CD4-positive, alpha-beta T cell (primary cell): ENCODE measurements at regions of chr3 and their contacts with region 1.

Region 1: GRCh38 chr3:126083913-126084767 is at the start of gene SLC41A3:
- DNase-seq: peak; percentile 65 to 88 (median 82)
- ATAC-seq: peak; percentile 86
- H3K4me3 ChIP-seq: peak within 1 kb of the TSS; percentile 70
- H3K4me3 Mint-ChIP-seq: peak within 1 kb of the TSS; percentile 93
- H3K27ac ChIP-seq: peak within 1 kb of the TSS; percentile 33 to 72
- H3K27ac Mint-ChIP-seq: peak within 1 kb of the TSS; percentile 85
- H3K4me1 ChIP-seq: peaks cover 28% of the 10 kb centered on the region
- H3K4me1 Mint-ChIP-seq: peaks cover 30% of the 10 kb centered on the region
- H3K27me3 ChIP-seq: no peaks in the 10 kb centered on the region
- H3K27me3 Mint-ChIP-seq: no peaks in the 10 kb centered on the region
- CTCF ChIP-seq: peak; percentile 82
- total RNA-seq, gene SLC41A3: 26.5 to 29.1 TPM

Region 2: DNA sequence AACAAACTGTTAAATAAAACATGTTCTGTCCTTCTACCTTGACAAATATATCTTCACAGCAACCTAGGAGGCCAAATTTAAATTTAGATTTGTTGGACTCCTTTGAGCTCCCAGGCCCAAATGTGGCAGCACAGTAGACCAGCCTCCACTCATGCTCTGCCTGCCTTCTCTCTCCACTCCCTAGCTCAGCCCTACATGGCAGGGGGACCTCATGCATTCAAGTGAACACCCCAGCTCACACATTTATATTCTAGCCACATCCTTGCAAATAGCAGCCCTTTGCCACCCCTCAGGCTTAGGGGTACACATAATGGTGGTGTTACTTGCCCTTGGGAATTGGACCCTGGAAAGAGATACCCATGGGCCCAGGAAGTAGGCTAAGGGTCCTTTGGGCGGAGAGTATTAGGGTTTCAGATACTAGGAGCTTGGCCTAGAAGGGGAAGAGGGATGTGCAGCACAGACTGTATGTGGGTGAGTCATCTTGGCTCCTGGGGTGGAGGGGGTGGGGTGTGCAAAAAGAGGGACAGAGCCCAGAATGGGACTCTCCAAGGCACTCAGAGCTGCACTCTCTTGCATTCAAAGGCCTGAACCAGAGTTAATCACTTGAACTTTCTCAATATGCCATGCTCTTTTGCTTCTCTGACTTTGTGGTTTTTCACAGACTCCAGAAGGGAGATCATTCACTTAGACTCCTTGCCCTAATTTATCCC is 1823.8 kb before region 1 on chr3:
- CTCF ChIA-PET with region 1: no interaction called
- POLR2A ChIA-PET with region 1: no interaction called
- intact Hi-C with region 1: no loop called
- DNase-seq: no peak
- ATAC-seq: no peak
- H3K4me3 ChIP-seq: no peak overlapping the region
- H3K4me3 Mint-ChIP-seq: no peak overlapping the region
- H3K27ac ChIP-seq: no peak overlapping the region
- H3K27ac Mint-ChIP-seq: no peak overlapping the region
- H3K4me1 ChIP-seq: no peaks in the 10 kb centered on the region
- H3K4me1 Mint-ChIP-seq: no peaks in the 10 kb centered on the region
- H3K27me3 ChIP-seq: no peaks in the 10 kb centered on the region
- H3K27me3 Mint-ChIP-seq: no peaks in the 10 kb centered on the region
- CTCF ChIP-seq: no peak

Region 3: GRCh38 chr3:125150525-125151441 is 933.4 kb before region 1 on chr3:
- CTCF ChIA-PET with region 1: no interaction called
- POLR2A ChIA-PET with region 1: no interaction called
- intact Hi-C with region 1: no loop called
- DNase-seq: peak in 12 of 14 experiments; percentile 20 to 73 (median 38)
- ATAC-seq: peak; percentile 81
- H3K4me3 ChIP-seq: no peak overlapping the region
- H3K4me3 Mint-ChIP-seq: no peak overlapping the region
- H3K27ac ChIP-seq: no peak overlapping the region
- H3K27ac Mint-ChIP-seq: no peak overlapping the region
- H3K4me1 ChIP-seq: peaks cover 27% of the 10 kb centered on the region
- H3K4me1 Mint-ChIP-seq: peaks cover 8% of the 10 kb centered on the region
- H3K27me3 ChIP-seq: no peaks in the 10 kb centered on the region
- H3K27me3 Mint-ChIP-seq: no peaks in the 10 kb centered on the region
- CTCF ChIP-seq: peak; percentile 47

Region 4: GRCh38 chr3:125594581-125595011 is 489.5 kb before region 1 on chr3:
- CTCF ChIA-PET with region 1: no interaction called
- POLR2A ChIA-PET with region 1: interaction called, 3 read pairs
- intact Hi-C with region 1: loop called in 1 of 2 experiments (anchors 5 kb)
- DNase-seq: no peak
- ATAC-seq: no peak
- H3K4me3 ChIP-seq: peak overlapping the region; percentile 92
- H3K4me3 Mint-ChIP-seq: peak overlapping the region; percentile 97
- H3K27ac ChIP-seq: peak overlapping the region; percentile 70 to 80
- H3K27ac Mint-ChIP-seq: peak overlapping the region; percentile 84
- H3K4me1 ChIP-seq: peaks cover 45% of the 10 kb centered on the region
- H3K4me1 Mint-ChIP-seq: peaks cover 46% of the 10 kb centered on the region
- H3K27me3 ChIP-seq: no peaks in the 10 kb centered on the region
- H3K27me3 Mint-ChIP-seq: no peaks in the 10 kb centered on the region
- CTCF ChIP-seq: no peak

Region 5: GRCh38 chr3:125990253-125990970 is 93.7 kb before region 1 on chr3:
- CTCF ChIA-PET with region 1: interaction called, 3 read pairs
- POLR2A ChIA-PET with region 1: interaction called, 23 read pairs
- intact Hi-C with region 1: loop called (anchors 1 to 5 kb)
- DNase-seq: peak; percentile 48 to 85 (median 62)
- ATAC-seq: peak; percentile 88
- H3K4me3 ChIP-seq: peak overlapping the region; percentile 91
- H3K4me3 Mint-ChIP-seq: peak overlapping the region; percentile 98
- H3K27ac ChIP-seq: peak overlapping the region; percentile 73 to 87
- H3K27ac Mint-ChIP-seq: peak overlapping the region; percentile 99
- H3K4me1 ChIP-seq: peaks cover 8% of the 10 kb centered on the region
- H3K4me1 Mint-ChIP-seq: peaks cover 53% of the 10 kb centered on the region
- H3K27me3 ChIP-seq: no peaks in the 10 kb centered on the region
- H3K27me3 Mint-ChIP-seq: no peaks in the 10 kb centered on the region
- CTCF ChIP-seq: no peak

Region 6: GRCh38 chr3:126982471-126983175 is 898.5 kb after region 1 on chr3 and contains the start of gene PLXNA1:
- CTCF ChIA-PET with region 1: no interaction called
- POLR2A ChIA-PET with region 1: no interaction called
- intact Hi-C with region 1: loop called in 1 of 2 experiments (anchors 10 kb)
- DNase-seq: peak; percentile 76 to 95 (median 85)
- ATAC-seq: peak; percentile 82
- H3K4me3 ChIP-seq: peak within 1 kb of the TSS; percentile 67
- H3K4me3 Mint-ChIP-seq: peak within 1 kb of the TSS; percentile 89
- H3K27ac ChIP-seq: peak within 1 kb of the TSS; percentile 88 to 90
- H3K27ac Mint-ChIP-seq: peak within 1 kb of the TSS; percentile 93
- H3K4me1 ChIP-seq: peaks cover 30% of the 10 kb centered on the region
- H3K4me1 Mint-ChIP-seq: peaks cover 15% of the 10 kb centered on the region
- H3K27me3 ChIP-seq: peaks cover 0 to 5% of the 10 kb centered on the region in 2 experiments
- H3K27me3 Mint-ChIP-seq: peaks cover 10% of the 10 kb centered on the region
- CTCF ChIP-seq: peak; percentile 99
- total RNA-seq, gene PLXNA1: 9.8 to 10.6 TPM

Region 7: DNA sequence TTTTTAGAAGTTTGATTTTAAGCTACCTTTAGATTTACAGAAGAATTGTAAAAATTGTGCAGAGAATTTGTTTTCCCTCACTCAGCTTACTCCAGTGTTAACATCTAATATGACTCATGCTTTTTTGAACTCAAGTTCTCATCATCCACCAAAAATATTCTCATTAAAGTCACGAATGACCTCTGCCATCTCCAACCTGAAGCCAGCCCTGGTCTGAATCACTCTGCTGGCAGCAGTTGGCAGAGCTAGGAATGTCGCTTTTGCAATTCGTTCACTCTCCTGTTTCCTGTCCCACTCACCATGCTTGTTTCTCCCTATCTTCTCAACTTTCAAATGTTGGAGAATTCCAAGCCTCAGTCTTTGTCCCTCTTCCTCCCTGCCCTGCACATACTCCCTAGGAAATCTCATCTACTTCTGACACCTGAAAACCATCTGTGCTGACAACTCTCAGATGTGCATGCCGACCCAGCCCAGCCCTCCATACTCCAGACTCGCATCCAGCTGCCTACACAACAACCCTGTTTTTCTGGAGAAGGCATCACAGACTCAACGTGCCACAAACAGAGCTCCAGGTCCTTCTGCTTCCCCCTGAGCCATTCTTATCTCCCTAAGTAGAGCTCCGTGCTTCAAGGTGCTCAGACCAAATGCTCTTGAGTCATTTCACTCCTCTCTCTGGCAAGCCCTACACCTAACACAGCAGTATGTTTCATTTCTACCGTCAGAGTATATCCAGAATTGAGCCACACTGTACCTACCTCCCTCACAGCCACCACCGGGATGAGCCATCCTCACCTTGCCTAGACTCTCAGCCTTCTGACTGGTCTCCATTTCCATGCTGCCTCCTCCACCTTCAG is 1133.7 kb after region 1 on chr3:
- CTCF ChIA-PET with region 1: no interaction called
- POLR2A ChIA-PET with region 1: no interaction called
- intact Hi-C with region 1: no loop called
- DNase-seq: no peak
- ATAC-seq: no peak
- H3K4me3 ChIP-seq: no peak overlapping the region
- H3K4me3 Mint-ChIP-seq: no peak overlapping the region
- H3K27ac ChIP-seq: no peak overlapping the region
- H3K27ac Mint-ChIP-seq: no peak overlapping the region
- H3K4me1 ChIP-seq: no peaks in the 10 kb centered on the region
- H3K4me1 Mint-ChIP-seq: peaks cover 10% of the 10 kb centered on the region
- H3K27me3 ChIP-seq: peaks cover 0 to 7% of the 10 kb centered on the region in 2 experiments
- H3K27me3 Mint-ChIP-seq: peaks cover 8% of the 10 kb centered on the region
- CTCF ChIP-seq: no peak